Gastrocnemius medialis (tissue), 4 donors: ENCODE measurements at regions of chr1 and their contacts with region 1.

Region 1: DNA sequence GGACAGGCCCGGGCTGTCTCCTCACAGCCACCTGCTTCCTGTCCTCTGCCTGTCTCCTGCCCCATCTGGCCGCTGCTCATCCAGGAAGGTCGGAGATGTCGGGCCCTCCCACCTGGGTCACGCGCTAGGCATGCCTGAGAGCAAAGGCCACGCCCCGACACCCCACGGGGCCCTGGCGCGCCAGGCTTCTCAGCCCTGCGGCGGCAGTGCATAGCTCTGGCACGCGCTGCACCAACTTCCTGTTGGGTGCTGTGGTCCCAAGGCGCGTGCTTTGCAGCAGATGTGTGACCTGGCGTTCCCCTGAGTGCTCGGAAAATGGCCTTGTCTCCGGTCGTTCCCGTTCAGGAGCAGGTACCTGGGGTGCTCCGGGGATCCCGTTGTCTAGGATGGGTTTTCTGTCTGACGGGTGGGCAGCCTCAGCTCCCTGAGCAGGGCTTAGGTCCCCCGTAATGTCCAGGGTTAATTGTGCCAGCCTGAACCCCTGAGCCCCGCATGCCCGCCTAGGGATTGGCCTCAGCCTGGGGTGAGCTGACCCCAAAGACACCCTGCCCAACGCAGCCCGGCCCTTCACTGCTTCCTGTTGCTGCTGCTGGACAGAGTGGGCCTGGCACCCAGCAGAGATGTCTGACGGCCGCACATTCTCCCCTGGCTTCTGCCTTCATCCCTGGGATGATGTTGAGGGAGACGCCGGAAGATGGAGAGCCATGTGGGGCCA is 19.4 kb upstream of the KCNAB2 start:
- DNase-seq: peak; percentile 64 to 83
- ATAC-seq: peak; percentile 46 to 51
- H3K4me3 ChIP-seq: peak overlapping the region in 2 of 4 donors; percentile 13 to 27
- H3K27ac ChIP-seq: peak overlapping the region; percentile 47 to 68 (median 60)
- H3K4me1 ChIP-seq: no peaks in the 10 kb centered on the region
- H3K27me3 ChIP-seq: no peaks in the 10 kb centered on the region
- CTCF ChIP-seq: no peak
- POLR2A ChIP-seq: peak; percentile 40 to 45

Region 2: DNA sequence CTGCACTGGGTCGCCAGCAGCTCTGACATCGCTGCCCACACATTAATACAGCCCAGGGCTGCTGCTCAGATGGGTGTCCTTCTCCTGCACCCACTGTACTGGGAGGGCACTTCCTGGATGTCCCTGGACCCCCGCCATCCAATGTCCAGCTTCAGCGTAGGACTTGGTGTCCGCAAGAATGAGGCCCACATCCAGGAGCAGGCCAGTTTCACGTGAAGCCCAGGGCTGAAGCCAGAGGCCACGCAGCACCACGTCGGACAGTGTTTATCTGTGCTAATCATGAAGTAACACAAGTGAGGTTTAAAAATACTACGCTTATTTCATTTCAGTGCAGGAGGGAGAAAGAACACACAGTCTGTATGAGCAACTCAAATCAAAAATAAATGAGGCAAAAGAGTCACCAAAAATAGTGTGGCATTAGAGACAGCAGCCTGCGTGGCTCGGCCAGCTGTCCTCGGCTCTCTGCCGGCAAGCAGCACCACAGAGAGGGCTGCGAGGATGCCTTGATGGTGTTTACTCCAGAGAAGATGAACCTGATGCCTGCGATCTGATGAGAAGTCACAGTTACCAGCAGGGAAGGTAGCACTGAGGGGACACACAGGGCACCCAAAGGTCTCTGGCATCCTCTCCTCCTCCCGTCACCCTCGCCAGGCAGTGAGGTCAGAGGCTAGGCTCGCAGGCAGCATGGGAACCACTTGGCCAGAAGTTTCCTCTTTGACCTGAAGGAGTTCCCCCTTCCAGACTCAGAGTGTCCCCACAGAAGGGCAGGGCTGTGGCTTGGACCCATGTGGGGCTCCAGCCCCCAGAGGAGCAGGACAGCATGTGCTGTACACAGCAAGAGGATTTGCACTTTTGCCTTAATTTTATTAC is 11.9 kb before region 1 on chr1:
- in situ Hi-C with region 1: no loop called
- intact Hi-C with region 1: loop called (anchors 1 kb)
- DNase-seq: peak; percentile 79 to 94
- ATAC-seq: peak; percentile 89 to 93
- H3K4me3 ChIP-seq: no peak overlapping the region
- H3K27ac ChIP-seq: peak overlapping the region; percentile 78 to 88 (median 86)
- H3K4me1 ChIP-seq: peaks cover 10 to 21% of the 10 kb centered on the region in 2 donors
- H3K27me3 ChIP-seq: no peaks in the 10 kb centered on the region
- CTCF ChIP-seq: peak in 1 of 5 experiments; percentile 9
- POLR2A ChIP-seq: peak; percentile 46 to 57